Activated CD4-positive, alpha-beta memory T cell treated with anti-CD3 and anti-CD28 coated beads, Interleukin-2, amount 10 ng/mL, durations not matched to agents 7 days and 5 days (primary cell): ENCODE measurements at regions of chr19 and their contacts with region 1.

Region 1: DNA sequence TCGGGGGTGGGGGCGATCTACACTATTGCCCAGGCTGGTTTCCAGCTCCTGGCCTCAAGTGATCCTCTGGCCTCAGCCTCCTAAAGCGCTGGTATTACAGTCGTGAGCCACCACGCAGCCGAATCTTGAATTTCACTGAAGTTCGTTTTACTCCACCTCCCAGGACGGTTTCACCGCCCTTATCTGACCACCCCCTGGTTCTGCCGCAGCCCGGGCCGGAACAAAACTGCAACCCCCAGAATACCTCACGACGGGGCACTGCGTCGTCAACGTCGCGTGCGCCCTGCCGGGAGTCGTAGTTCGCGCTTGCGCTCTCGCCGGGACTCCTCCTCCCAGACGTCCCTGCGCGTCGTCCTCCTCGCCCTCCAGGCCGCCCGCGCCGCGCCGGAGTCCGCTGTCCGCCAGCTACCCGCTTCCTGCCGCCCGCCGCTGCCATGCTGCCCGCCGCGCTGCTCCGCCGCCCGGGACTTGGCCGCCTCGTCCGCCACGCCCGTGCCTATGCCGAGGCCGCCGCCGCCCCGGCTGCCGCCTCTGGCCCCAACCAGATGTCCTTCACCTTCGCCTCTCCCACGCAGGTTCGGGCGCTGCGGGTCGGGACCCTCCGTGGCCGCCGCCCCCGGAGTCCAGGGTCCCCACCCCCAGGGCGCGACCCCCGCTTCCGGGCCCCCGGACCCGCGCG is at the start of gene ATP5F1D:
- DNase-seq: peak; percentile 93
- H3K4me3 Mint-ChIP-seq: peak within 1 kb of the TSS; percentile 88
- H3K27ac Mint-ChIP-seq: peak within 1 kb of the TSS; percentile 84
- H3K4me1 Mint-ChIP-seq: peaks cover 46% of the 10 kb centered on the region
- H3K27me3 Mint-ChIP-seq: peaks cover 15% of the 10 kb centered on the region
- total RNA-seq, gene ATP5F1D: 171 to 173 TPM

Region 2: DNA sequence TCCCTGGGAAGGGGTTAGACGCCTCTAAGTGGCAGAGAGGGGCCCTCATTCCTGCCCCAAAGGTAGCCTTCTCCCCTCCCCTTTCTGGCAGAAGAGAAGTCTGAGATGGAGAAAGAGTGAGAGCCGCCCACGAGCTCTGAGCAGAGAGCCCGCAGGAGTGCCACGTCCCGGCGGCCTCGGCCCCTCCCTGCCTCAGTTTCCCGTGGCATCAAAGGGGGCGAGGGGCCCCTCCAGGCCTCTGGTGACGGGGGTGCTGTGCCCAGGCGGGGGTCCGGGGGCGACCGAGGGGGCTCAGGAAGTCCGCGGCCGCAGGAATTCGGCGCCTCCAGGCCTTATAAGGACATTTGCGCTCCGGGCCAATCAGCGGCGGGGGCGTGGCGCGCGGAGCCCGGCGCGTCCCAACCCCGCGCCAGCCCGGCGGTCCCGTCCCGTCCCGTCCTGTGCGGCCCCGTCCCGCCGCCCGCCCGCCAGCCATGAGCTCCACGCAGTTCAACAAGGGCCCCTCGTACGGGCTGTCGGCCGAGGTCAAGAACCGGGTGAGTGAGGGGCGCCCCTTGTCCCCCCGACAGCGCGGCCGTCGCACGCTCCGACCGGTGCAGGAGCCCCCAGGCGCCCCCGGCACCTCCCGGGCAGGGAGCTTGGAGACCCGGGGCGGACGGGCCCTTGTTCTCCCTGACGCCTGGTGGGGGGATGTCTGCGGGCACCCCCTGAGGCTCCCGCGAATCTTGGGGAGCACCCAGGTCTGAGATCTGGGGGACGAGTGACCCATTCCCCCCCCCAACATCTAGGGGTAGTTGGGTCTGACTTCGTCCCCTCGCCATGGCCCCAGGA is 215.2 kb before region 1 on chr19 and contains the start of gene CNN2:
- CTCF ChIA-PET with region 1: interaction called, 17 read pairs
- POLR2A ChIA-PET with region 1: interaction called, 5 read pairs
- DNase-seq: peak; percentile 78
- H3K4me3 Mint-ChIP-seq: peak within 1 kb of the TSS; percentile 97
- H3K27ac Mint-ChIP-seq: peak within 1 kb of the TSS; percentile 95
- H3K4me1 Mint-ChIP-seq: peaks cover 33% of the 10 kb centered on the region
- H3K27me3 Mint-ChIP-seq: no peaks in the 10 kb centered on the region
- total RNA-seq, gene CNN2: 513 to 519 TPM

Region 3: DNA sequence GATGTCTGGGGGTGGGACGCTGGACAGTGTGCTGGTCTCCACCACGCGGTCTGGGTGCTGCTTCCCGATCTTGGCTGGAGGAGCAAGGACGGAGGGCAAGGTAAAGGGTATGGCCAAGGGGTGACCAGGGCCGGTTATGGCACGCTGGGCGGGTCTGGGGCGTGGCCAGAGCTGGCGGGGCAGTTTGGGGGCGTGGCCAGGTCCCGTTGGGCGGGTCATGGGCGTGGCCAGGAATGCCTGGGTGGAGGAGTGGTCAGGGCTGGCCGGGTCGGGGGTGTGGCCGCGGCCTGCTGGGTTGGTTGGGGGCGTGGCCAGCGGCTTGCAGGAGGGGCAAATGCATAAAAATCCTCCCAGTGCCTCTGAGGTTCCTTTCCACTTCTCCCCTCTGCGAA is 118.6 kb before region 1 on chr19:
- CTCF ChIA-PET with region 1: no interaction called
- POLR2A ChIA-PET with region 1: no interaction called
- DNase-seq: peak; percentile 65
- H3K4me3 Mint-ChIP-seq: no peak overlapping the region
- H3K27ac Mint-ChIP-seq: no peak overlapping the region
- H3K4me1 Mint-ChIP-seq: peaks cover 15% of the 10 kb centered on the region
- H3K27me3 Mint-ChIP-seq: no peaks in the 10 kb centered on the region

Region 4: GRCh38 chr19:1173845-1174809 is 67.4 kb before region 1 on chr19 and contains the start of gene SBNO2:
- CTCF ChIA-PET with region 1: no interaction called
- POLR2A ChIA-PET with region 1: no interaction called
- DNase-seq: peak; percentile 95
- H3K4me3 Mint-ChIP-seq: peak within 1 kb of the TSS; percentile 88
- H3K27ac Mint-ChIP-seq: peak within 1 kb of the TSS; percentile 88
- H3K4me1 Mint-ChIP-seq: peaks cover 34% of the 10 kb centered on the region
- H3K27me3 Mint-ChIP-seq: no peaks in the 10 kb centered on the region
- total RNA-seq, gene SBNO2: 94.4 to 98.2 TPM

Region 5: DNA sequence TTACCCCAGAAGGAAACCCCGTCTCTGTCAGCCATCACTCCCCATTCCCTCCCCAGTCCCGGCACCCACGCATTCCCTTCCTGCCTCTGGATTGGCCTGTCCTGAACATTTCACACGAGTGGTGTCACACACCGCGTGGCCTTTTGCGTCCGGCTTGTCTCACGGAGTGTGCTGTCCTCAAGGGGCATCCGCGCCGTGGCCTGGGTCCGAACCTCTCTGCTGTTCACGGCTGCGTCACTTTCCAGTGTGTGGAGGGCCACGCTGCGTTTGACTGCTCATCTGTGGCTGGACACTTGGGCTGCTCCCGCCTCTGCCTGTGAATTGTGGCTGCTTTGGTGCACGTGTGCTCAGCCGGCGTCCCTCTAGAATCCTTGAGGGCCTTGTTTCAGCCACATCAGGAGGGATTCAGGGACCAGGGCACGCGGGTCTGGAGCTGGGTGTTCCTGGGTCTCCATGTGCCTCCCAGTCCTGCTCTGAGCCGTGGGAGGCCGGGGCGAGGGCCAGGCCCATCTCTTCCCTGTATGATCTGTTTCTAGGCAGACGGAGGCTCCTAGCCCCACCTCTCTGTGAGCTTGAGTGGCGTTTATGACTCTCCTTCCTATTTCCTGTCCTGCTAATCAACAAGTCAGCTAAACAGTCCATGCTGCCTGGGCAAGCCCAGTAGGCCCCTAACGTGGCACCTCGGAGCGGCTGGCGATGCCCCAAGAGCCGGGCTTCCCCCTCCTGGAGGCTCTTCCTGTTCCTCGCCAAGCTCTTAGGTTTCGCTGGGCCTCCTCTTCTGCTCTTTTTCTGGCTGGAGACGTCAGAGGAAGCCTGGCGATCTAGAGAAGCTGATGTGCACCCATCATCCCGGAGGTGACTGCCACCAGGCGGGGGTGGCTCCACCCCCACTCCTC is 27.9 kb before region 1 on chr19:
- CTCF ChIA-PET with region 1: interaction called, 13 read pairs
- POLR2A ChIA-PET with region 1: no interaction called
- DNase-seq: peak; percentile 72
- H3K4me3 Mint-ChIP-seq: peak overlapping the region; percentile 73
- H3K27ac Mint-ChIP-seq: peak overlapping the region; percentile 96
- H3K4me1 Mint-ChIP-seq: peaks cover 44% of the 10 kb centered on the region
- H3K27me3 Mint-ChIP-seq: no peaks in the 10 kb centered on the region

Region 6: GRCh38 chr19:1260636-1261537 is 19.3 kb after region 1 on chr19:
- CTCF ChIA-PET with region 1: interaction called, 412 read pairs
- POLR2A ChIA-PET with region 1: interaction called, 266 read pairs
- DNase-seq: peak; percentile 98
- H3K4me3 Mint-ChIP-seq: peak overlapping the region; percentile 93
- H3K27ac Mint-ChIP-seq: peak overlapping the region; percentile 98
- H3K4me1 Mint-ChIP-seq: peaks cover 58% of the 10 kb centered on the region
- H3K27me3 Mint-ChIP-seq: no peaks in the 10 kb centered on the region

Region 7: GRCh38 chr19:1275260-1275975 is 33.9 kb after region 1 on chr19 and contains the start of gene FAM174C:
- CTCF ChIA-PET with region 1: interaction called, 23 read pairs
- POLR2A ChIA-PET with region 1: interaction called, 16 read pairs
- DNase-seq: peak; percentile 96
- H3K4me3 Mint-ChIP-seq: peak within 1 kb of the TSS; percentile 82
- H3K27ac Mint-ChIP-seq: peak within 1 kb of the TSS; percentile 96
- H3K4me1 Mint-ChIP-seq: peaks cover 55% of the 10 kb centered on the region
- H3K27me3 Mint-ChIP-seq: no peaks in the 10 kb centered on the region
- total RNA-seq, gene FAM174C: 45.9 to 50.1 TPM

Region 8: DNA sequence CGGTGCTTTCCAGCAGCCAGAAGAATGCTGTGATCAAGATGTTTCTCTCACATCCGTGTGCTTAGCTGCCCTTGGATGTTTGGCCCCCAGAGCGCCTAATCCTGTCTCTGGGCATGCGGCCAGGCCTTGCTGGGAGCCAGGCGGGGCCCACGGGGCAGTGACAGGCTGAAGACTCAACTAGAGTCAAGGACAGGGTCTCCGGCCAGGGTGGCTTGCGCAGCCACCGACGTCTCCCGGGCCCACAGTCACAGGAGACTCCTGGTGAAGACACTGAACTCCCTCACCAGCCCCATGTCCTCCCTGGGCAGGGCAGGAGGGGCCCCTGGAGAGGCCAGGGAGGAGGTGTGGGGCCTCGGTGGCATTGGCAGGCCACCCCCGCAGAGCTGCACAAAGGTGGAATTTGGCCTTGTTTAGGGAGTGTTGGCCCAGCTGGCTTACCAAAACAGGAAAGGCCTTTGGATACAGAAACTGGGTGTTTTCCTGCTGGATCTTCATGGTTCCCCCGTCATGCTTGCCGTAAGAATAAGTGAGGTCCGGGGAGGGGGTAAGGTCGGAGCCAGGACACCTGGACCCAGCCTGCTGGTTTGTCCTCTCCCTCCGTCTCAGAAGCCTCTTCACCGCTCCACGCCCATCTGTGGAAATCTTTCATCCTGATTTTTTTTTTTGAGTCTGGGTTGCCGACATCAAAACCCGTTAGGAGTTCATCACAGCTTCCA is 132.1 kb after region 1 on chr19:
- CTCF ChIA-PET with region 1: interaction called, 12 read pairs
- POLR2A ChIA-PET with region 1: no interaction called
- DNase-seq: no peak
- H3K4me3 Mint-ChIP-seq: no peak overlapping the region
- H3K27ac Mint-ChIP-seq: no peak overlapping the region
- H3K4me1 Mint-ChIP-seq: no peaks in the 10 kb centered on the region
- H3K27me3 Mint-ChIP-seq: no peaks in the 10 kb centered on the region